Posterior cingulate gyrus (tissue), 11 donors: ENCODE measurements at regions of chr11 and their contacts with region 1.

Region 1: GRCh38 chr11:56624661-56625110 is 10.0 kb upstream of the OR5M1 start:
- DNase-seq: no peak

Region 2: GRCh38 chr11:56659755-56660154 is 35.1 kb after region 1 on chr11:
- intact Hi-C with region 1: no loop called
- DNase-seq: no peak

Region 3: DNA sequence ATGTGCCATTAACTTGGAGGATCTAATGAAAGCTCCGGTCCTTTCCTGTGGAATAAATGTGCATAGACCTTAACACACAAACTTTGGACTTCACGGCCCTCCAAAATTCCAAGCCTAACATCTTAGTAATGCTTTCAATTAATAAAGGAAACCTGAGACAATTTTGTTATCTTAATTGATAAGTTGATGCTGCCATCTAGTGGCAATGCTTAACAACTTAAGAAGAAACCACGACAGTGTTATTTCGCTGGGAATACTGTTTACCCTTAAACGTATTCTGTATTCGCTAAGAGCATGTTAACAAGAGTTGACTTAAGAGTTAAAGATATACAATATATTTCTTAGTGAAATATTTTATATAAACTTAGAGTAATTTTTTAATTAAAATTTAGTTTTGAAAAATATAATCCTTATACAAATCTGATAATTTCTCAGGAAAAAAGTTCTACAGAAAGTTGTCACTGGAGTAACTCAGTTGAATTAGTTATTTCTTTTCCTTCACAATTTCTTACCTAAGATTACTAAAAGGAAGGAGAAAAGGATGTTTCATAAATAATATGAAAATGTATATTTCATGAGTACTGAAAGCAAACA is 158.9 kb after region 1 on chr11:
- intact Hi-C with region 1: loop called (anchors 2 kb)
- DNase-seq: no peak